A673 (cell line): ENCODE measurements at regions of chr2 and their contacts with region 1.

Region 1: DNA sequence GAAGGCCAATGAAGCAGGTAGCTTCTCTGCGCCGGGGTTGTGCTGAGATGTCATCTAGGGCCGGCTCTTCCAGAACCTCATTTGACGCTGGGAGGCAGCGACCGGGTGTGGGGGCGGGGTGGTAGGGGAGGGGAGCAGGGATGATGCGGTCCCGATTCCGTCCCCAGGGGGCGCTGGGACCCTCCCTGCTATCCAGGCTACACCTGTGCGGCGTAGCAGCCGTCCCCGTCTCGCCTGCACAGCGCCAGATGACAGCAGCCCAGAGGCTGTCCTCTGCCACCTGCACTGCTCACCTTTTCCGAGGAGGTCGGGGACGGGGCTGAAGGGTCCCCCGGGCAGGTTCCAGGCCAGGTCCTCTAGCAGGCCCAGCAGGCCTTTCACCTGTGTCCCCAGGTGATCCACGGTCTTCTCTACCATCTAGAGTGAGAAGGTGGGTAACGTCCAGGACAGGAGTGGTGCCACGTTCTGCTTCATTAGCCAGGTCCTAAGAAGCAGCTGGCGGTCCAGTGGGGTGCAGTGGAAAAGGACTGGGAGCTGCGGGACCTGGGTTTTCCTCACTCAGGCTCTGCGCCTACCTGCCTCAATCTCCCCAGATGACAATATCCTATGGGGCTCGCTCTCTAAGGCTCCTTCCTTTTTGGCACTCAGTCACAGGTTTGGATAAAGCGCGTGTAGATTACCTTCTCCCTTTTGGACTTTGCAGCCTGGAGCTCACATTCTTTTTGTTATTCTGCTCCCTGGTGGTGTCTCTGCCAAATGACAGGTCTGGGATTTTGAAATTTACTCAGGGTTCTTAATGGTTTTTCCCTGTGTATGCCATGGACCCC is 56.0 kb upstream of the RAB6C start:
- DNase-seq: peak; percentile 75
- H3K4me3 ChIP-seq: peak overlapping the region; percentile 34
- H3K27ac ChIP-seq: no peak overlapping the region
- H3K4me1 ChIP-seq: peaks cover 7% of the 10 kb centered on the region
- H3K27me3 ChIP-seq: peaks cover 13% of the 10 kb centered on the region
- CTCF ChIP-seq: peak; percentile 61

Region 2: DNA sequence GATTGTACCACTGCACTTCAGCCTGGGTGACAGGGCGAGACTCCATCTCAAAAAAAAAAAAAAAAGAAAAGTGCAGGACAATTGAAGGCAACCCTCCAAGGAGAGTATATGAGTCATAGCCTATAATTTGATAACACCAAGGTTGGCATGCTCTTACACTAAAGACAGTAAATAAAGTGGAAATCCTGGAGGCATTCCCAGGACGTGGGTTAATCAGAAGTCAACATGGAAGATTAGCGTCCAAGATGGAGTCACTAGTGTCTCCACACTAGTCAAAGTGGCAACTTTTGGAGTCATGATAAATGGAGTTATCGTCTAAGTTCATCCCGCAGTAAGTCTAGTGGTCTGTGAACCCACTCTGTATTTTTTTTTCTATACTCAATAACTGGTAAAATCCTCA is 1853.7 kb before region 1 on chr2:
- CTCF ChIA-PET with region 1: no interaction called
- POLR2A ChIA-PET with region 1: no interaction called
- intact Hi-C with region 1: loop called (anchors 10 kb)
- DNase-seq: no peak
- H3K4me3 ChIP-seq: no peak overlapping the region
- H3K27ac ChIP-seq: no peak overlapping the region
- H3K4me1 ChIP-seq: no peaks in the 10 kb centered on the region
- H3K27me3 ChIP-seq: no peaks in the 10 kb centered on the region
- CTCF ChIP-seq: no peak

Region 3: GRCh38 chr2:128736689-128737545 is 1186.6 kb before region 1 on chr2:
- CTCF ChIA-PET with region 1: no interaction called
- POLR2A ChIA-PET with region 1: no interaction called
- intact Hi-C with region 1: loop called (anchors 5 kb)
- DNase-seq: peak; percentile 90
- H3K4me3 ChIP-seq: no peak overlapping the region
- H3K27ac ChIP-seq: no peak overlapping the region
- H3K4me1 ChIP-seq: peaks cover 32% of the 10 kb centered on the region
- H3K27me3 ChIP-seq: no peaks in the 10 kb centered on the region
- CTCF ChIP-seq: peak; percentile 99

Region 4: GRCh38 chr2:128921751-128922150 is 1001.7 kb before region 1 on chr2:
- CTCF ChIA-PET with region 1: no interaction called
- POLR2A ChIA-PET with region 1: no interaction called
- intact Hi-C with region 1: no loop called
- DNase-seq: no peak
- H3K4me3 ChIP-seq: no peak overlapping the region
- H3K27ac ChIP-seq: no peak overlapping the region
- H3K4me1 ChIP-seq: no peaks in the 10 kb centered on the region
- H3K27me3 ChIP-seq: peaks cover 32% of the 10 kb centered on the region
- CTCF ChIP-seq: no peak

Region 5: DNA sequence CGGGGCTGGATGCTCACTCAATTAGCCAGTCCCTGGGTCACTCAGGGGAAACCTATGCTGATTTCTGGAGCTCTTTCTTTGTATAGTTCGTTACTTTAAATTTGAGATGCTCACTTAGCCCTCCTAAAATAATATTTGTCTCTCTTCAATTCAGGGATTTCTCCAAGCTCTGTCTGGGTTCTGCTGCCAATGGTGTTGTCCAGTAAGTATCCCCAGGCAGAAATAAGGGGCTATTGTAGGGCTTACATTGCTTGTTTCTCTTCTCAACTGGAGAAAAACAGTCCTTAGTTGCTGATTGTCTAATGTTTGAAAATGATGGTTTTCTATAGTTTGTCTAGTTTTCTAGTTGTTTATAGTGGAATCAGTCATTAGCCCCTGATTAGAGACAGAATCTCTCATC is 60.9 kb after region 1 on chr2:
- CTCF ChIA-PET with region 1: no interaction called
- POLR2A ChIA-PET with region 1: no interaction called
- intact Hi-C with region 1: no loop called
- DNase-seq: no peak
- H3K4me3 ChIP-seq: no peak overlapping the region
- H3K27ac ChIP-seq: no peak overlapping the region
- H3K4me1 ChIP-seq: no peaks in the 10 kb centered on the region
- H3K27me3 ChIP-seq: peaks cover 52% of the 10 kb centered on the region
- CTCF ChIP-seq: no peak